CD8-positive, alpha-beta T cell (primary cell): ENCODE measurements at regions of chr11 and their contacts with region 1.

Region 1: GRCh38 chr11:73141848-73142286 is 251 bp downstream of the FCHSD2 start:
- DNase-seq: peak in 7 of 9 experiments; percentile 23 to 81 (median 66)
- ATAC-seq: peak; percentile 27
- H3K4me3 ChIP-seq: peak overlapping the region; percentile 97 to 99
- H3K4me3 Mint-ChIP-seq: peak overlapping the region; percentile 98
- H3K27ac ChIP-seq: peak overlapping the region; percentile 83 to 87
- H3K27ac Mint-ChIP-seq: peak overlapping the region; percentile 96
- H3K4me1 ChIP-seq: peaks cover 33% of the 10 kb centered on the region
- H3K4me1 Mint-ChIP-seq: peaks cover 52% of the 10 kb centered on the region
- H3K27me3 ChIP-seq: no peaks in the 10 kb centered on the region
- H3K27me3 Mint-ChIP-seq: no peaks in the 10 kb centered on the region
- CTCF ChIP-seq: no peak

Region 2: DNA sequence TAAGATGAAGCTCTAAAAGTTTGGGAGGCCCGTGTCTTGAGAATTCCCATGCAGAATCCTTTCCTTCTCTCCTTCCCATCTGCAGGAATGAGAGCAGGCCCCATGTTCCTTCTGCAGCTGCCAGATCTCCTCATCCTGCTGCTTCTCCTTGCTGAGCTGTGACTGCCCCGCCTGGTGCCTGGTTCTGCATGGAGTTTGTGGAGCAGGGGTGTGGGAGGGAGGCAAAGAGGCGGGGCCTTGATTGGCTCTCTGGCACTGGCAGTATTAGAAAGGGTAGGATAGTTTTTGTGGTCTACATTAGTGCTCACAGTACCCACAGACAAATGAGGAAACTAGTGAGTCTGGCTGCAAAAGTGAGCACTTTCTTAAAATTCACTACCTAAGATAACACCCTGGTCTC is 616.4 kb before region 1 on chr11:
- CTCF ChIA-PET with region 1: no interaction called
- POLR2A ChIA-PET with region 1: no interaction called
- intact Hi-C with region 1: no loop called
- DNase-seq: no peak
- ATAC-seq: no peak
- H3K4me3 ChIP-seq: no peak overlapping the region
- H3K4me3 Mint-ChIP-seq: no peak overlapping the region
- H3K27ac ChIP-seq: no peak overlapping the region
- H3K27ac Mint-ChIP-seq: no peak overlapping the region
- H3K4me1 ChIP-seq: peaks cover 11% of the 10 kb centered on the region
- H3K4me1 Mint-ChIP-seq: peaks cover 18% of the 10 kb centered on the region
- H3K27me3 ChIP-seq: no peaks in the 10 kb centered on the region
- H3K27me3 Mint-ChIP-seq: no peaks in the 10 kb centered on the region
- CTCF ChIP-seq: no peak

Region 3: DNA sequence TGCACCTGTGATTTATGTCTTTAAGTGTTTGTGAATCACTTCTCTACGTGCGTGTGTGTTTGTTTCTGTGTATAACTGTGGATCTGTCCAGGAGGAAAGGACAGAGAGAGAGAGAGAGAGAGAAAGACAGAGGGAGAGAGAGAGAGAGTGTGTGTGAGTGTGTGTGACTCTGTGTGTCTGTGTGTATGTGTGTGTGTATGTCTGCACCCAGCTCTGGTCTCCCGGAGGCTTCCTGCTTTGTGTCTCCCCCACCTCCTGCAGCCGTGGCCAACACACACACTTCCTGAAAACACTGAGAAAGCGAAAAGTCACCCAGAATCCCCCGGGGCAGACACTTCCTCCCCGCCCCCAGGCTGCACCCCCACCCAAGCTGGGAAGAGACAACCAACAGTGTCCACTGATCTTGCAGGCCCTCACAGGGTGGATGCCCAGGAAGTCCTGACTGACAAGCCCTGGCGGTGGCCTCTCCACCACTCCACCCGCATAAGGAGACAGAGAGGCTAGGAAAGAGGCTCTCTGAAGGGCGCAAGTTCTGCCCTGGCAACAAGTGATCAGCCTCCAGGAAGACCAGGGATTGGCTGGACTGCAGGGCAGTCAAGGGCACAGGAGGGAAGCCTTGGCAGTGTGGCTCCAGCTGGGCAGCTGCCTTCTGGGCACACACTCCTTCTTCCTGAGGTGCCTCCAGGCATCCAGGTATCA is 419.7 kb before region 1 on chr11:
- CTCF ChIA-PET with region 1: interaction called, 3 read pairs
- POLR2A ChIA-PET with region 1: interaction called, 3 read pairs
- intact Hi-C with region 1: loop called (anchors 1 kb)
- DNase-seq: peak; percentile 72 to 94 (median 87)
- ATAC-seq: peak; percentile 81
- H3K4me3 ChIP-seq: peak overlapping the region; percentile 77 to 89
- H3K4me3 Mint-ChIP-seq: peak overlapping the region; percentile 98
- H3K27ac ChIP-seq: peak overlapping the region; percentile 80 to 87
- H3K27ac Mint-ChIP-seq: peak overlapping the region; percentile 98
- H3K4me1 ChIP-seq: peaks cover 64% of the 10 kb centered on the region
- H3K4me1 Mint-ChIP-seq: peaks cover 65% of the 10 kb centered on the region
- H3K27me3 ChIP-seq: no peaks in the 10 kb centered on the region
- H3K27me3 Mint-ChIP-seq: no peaks in the 10 kb centered on the region
- CTCF ChIP-seq: no peak

Region 4: DNA sequence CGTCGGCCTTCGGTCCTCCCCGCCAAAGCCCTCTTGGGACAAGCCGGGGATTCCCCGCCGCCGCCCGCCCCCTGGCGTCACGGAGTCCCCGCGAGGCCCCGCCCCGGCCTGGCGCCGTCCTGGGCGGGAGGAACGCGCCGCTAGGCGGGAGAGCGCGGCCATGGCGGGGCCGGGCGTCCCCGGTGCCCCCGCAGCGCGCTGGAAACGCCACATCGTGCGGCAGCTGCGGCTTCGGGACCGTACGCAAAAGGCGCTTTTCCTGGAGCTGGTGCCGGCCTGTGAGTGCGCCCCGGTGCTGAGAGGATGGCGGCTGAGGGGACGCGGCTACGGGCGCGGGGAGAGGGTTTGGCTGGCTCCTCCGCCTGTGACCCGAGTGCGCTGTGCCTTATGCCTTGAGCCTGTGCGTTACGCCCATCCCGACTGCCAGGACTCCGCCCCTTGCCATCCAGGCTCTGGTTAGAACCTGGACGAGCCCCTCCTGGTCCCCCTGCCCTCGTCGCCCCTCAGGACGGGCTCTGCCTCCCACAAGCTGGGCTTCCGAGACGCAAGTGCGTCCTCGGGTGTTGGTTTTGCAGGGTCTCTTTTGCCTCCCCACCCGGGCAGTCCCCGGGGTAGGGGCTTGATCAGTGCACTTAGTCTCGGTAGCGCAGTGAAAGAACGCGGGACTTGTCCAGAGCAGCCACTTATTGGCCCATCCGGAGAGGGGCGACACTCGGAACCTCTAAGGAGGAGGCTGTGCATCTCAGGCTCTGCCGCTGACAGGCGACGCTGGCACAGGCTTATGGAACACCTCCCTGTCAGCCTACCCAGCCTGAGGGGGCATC is 327.4 kb before region 1 on chr11 and contains the start of gene ATG16L2:
- CTCF ChIA-PET with region 1: no interaction called
- POLR2A ChIA-PET with region 1: interaction called, 4 read pairs
- intact Hi-C with region 1: loop called (anchors 1 kb)
- DNase-seq: peak; percentile 83 to 96 (median 88)
- ATAC-seq: peak; percentile 78
- H3K4me3 ChIP-seq: peak within 1 kb of the TSS; percentile 97 to 98
- H3K4me3 Mint-ChIP-seq: peak within 1 kb of the TSS; percentile 99
- H3K27ac ChIP-seq: peak within 1 kb of the TSS; percentile 99 to 100
- H3K27ac Mint-ChIP-seq: peak within 1 kb of the TSS; percentile 99
- H3K4me1 ChIP-seq: peaks cover 26% of the 10 kb centered on the region
- H3K4me1 Mint-ChIP-seq: peaks cover 48% of the 10 kb centered on the region
- H3K27me3 ChIP-seq: no peaks in the 10 kb centered on the region
- H3K27me3 Mint-ChIP-seq: no peaks in the 10 kb centered on the region
- CTCF ChIP-seq: peak; percentile 20
- total RNA-seq, gene ATG16L2: 45.7 to 52.8 TPM

Region 5: GRCh38 chr11:73034777-73035176 is 107.1 kb before region 1 on chr11:
- CTCF ChIA-PET with region 1: interaction called, 3 read pairs
- POLR2A ChIA-PET with region 1: interaction called, 5 read pairs
- intact Hi-C with region 1: loop called in 1 of 2 experiments (anchors 1 kb)
- DNase-seq: peak in 1 of 9 experiments; percentile 10
- ATAC-seq: peak; percentile 62
- H3K4me3 ChIP-seq: no peak overlapping the region
- H3K4me3 Mint-ChIP-seq: peak overlapping the region; percentile 63
- H3K27ac ChIP-seq: no peak overlapping the region
- H3K27ac Mint-ChIP-seq: peak overlapping the region; percentile 84
- H3K4me1 ChIP-seq: peaks cover 28% of the 10 kb centered on the region
- H3K4me1 Mint-ChIP-seq: peaks cover 41% of the 10 kb centered on the region
- H3K27me3 ChIP-seq: no peaks in the 10 kb centered on the region
- H3K27me3 Mint-ChIP-seq: no peaks in the 10 kb centered on the region
- CTCF ChIP-seq: no peak

Region 6: GRCh38 chr11:73177778-73178577 is 36.1 kb after region 1 on chr11:
- CTCF ChIA-PET with region 1: interaction called, 66 read pairs
- POLR2A ChIA-PET with region 1: interaction called, 12 read pairs
- intact Hi-C with region 1: loop called in 1 of 2 experiments (anchors 1 kb)
- DNase-seq: peak; percentile 65 to 87 (median 80)
- ATAC-seq: peak; percentile 100
- H3K4me3 ChIP-seq: no peak overlapping the region
- H3K4me3 Mint-ChIP-seq: no peak overlapping the region
- H3K27ac ChIP-seq: no peak overlapping the region
- H3K27ac Mint-ChIP-seq: no peak overlapping the region
- H3K4me1 ChIP-seq: no peaks in the 10 kb centered on the region
- H3K4me1 Mint-ChIP-seq: peaks cover 3% of the 10 kb centered on the region
- H3K27me3 ChIP-seq: no peaks in the 10 kb centered on the region
- H3K27me3 Mint-ChIP-seq: no peaks in the 10 kb centered on the region
- CTCF ChIP-seq: peak; percentile 80

Region 7: GRCh38 chr11:73876424-73877300 is 734.8 kb after region 1 on chr11 and contains the starts of genes COA4 and PAAF1:
- CTCF ChIA-PET with region 1: no interaction called
- POLR2A ChIA-PET with region 1: no interaction called
- intact Hi-C with region 1: loop called in 1 of 2 experiments (anchors 5 kb)
- DNase-seq: peak; percentile 81 to 98 (median 92)
- ATAC-seq: peak; percentile 96
- H3K4me3 ChIP-seq: peak within 1 kb of the TSS; percentile 75 to 79
- H3K4me3 Mint-ChIP-seq: peak within 1 kb of the TSS; percentile 97
- H3K27ac ChIP-seq: peak within 1 kb of the TSS; percentile 79 to 81
- H3K27ac Mint-ChIP-seq: peak within 1 kb of the TSS; percentile 98
- H3K4me1 ChIP-seq: peaks cover 21% of the 10 kb centered on the region
- H3K4me1 Mint-ChIP-seq: peaks cover 42% of the 10 kb centered on the region
- H3K27me3 ChIP-seq: no peaks in the 10 kb centered on the region
- H3K27me3 Mint-ChIP-seq: no peaks in the 10 kb centered on the region
- CTCF ChIP-seq: no peak
- total RNA-seq, gene COA4: 22.0 to 25.1 TPM
- total RNA-seq, gene PAAF1: 6.2 to 6.4 TPM